Aorta (tissue), 5 donors: ENCODE measurements at regions of chr14 and their contacts with region 1.

Region 1: DNA sequence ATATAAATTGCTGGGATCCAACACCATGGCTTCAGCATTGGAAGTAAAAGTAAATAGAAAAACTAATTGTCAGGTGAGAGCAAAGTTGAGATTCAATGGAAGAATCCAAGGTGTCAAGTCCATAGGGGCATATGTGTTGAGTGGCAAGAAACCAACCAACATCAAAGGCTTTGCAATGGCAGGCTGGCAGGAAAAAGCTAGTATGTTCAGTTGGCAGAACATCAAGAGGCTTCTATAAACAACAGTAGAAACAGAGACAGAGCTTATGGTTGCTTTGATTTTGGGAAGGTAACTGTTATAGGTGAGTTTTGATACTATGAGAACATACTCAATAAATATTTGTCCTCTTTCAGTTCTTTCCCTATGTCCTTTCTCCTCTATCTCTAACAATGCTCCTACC is 553.7 kb upstream of the MDGA2 start:
- DNase-seq: no peak
- ATAC-seq: no peak
- H3K4me3 ChIP-seq: no peak overlapping the region
- H3K27ac ChIP-seq: no peak overlapping the region
- H3K4me1 ChIP-seq: no peaks in the 10 kb centered on the region
- H3K27me3 ChIP-seq: no peaks in the 10 kb centered on the region

Region 2: GRCh38 chr14:47976139-47976538 is 253.0 kb before region 1 on chr14:
- intact Hi-C with region 1: no loop called
- DNase-seq: no peak
- ATAC-seq: no peak
- H3K4me3 ChIP-seq: no peak overlapping the region
- H3K27ac ChIP-seq: no peak overlapping the region
- H3K4me1 ChIP-seq: no peaks in the 10 kb centered on the region
- H3K27me3 ChIP-seq: no peaks in the 10 kb centered on the region

Region 3: GRCh38 chr14:48023881-48024280 is 205.2 kb before region 1 on chr14:
- intact Hi-C with region 1: no loop called
- DNase-seq: no peak
- ATAC-seq: no peak
- H3K4me3 ChIP-seq: no peak overlapping the region
- H3K27ac ChIP-seq: no peak overlapping the region
- H3K4me1 ChIP-seq: no peaks in the 10 kb centered on the region
- H3K27me3 ChIP-seq: no peaks in the 10 kb centered on the region

Region 4: GRCh38 chr14:48914382-48914781 is 685.3 kb after region 1 on chr14:
- intact Hi-C with region 1: loop called in 1 of 2 experiments (anchors 10 kb)
- DNase-seq: no peak
- ATAC-seq: no peak
- H3K4me3 ChIP-seq: no peak overlapping the region
- H3K27ac ChIP-seq: no peak overlapping the region
- H3K4me1 ChIP-seq: no peaks in the 10 kb centered on the region
- H3K27me3 ChIP-seq: no peaks in the 10 kb centered on the region